Aorta (tissue), 5 donors: ENCODE measurements at regions of chr5 and their contacts with region 1.

Region 1: DNA sequence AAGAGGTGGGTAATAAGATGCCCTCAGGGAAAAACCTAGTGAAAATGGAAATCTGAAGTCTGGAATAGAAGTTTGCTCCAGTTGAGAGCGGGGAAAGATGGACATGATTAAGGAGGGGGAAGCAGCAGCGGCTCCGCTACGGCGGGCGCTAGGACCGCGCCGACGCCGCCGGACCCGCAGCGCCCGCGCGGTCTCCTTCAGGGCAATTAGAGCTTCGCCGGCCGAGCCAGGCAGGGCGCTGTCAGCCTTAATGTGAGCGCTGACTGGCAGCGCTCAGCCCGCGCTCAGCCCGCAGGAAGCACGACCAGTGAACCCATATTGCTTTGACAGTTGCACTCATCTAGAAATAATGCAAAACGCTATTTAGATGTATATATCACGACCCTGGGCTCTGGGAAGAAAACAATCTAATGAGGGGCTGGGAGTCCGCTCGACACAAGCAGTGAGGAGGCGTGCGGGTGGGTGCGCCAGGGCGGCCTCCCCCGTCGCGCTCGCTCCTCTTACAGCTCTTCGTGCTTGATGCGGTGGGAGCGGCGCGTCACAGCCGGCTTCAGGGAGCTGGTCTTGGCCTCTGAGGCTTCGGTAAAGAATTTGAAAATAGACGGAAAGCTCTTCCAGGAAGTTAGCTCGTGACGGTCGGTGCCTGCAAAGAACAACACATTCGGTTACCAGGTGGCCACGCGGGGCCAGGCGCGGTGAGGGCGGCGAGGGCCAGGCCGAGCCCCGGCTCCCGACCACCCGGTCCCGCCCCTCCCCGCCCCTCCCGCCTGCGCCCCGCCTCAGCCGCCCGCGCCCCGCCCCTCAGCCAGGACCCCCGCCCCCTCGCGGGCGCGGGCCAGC is 37.7 kb downstream of the NR2F1 start:
- DNase-seq: peak; percentile 74 to 88
- ATAC-seq: peak; percentile 92
- H3K4me3 ChIP-seq: peak overlapping the region; percentile 27 to 30
- H3K27ac ChIP-seq: peak overlapping the region in 1 of 2 donors; percentile 22
- H3K4me1 ChIP-seq: no peaks in the 10 kb centered on the region
- H3K27me3 ChIP-seq: no peaks in the 10 kb centered on the region

Region 2: DNA sequence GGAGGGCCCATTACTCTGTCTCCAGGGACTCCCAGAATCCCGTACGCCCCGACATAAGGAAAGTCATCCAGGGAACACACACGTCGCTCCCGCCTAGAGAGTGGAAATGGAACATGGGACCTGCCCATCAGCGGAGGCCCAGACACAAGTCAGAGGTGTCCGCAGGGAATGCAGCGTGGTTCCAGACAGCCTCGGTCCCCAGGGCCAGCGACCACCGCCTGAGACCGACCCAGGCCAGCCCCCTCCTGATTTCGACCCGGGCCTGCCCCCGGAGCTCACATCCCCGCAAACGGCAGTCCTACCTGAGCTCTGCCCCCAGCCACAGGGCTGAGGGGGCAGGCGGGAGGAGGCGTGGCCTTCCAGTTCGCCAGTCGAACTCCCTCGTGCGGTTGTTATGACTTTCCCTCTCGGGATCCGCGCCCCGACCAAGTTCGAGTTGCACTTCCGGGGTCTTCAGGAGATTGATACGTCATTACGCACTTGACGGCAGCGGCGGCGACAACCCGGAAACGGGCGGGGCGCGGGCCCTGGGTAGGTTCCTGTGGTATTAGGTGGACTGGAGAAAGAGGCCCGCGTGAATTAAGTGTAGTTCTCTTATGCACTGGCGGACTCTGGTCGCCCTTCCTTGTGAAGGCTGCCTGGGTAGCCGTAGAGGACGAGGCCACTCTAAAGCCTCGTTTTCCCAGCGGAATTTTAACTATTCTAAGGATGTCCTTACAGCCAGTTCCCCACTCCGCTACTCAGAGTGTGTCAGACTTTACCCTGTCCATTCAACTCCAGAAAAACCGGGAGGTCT is 490.7 kb after region 1 on chr5:
- intact Hi-C with region 1: loop called in 1 of 2 experiments (anchors 10 kb)
- DNase-seq: peak; percentile 97 to 98
- ATAC-seq: peak; percentile 98
- H3K4me3 ChIP-seq: peak overlapping the region; percentile 47 to 64
- H3K27ac ChIP-seq: peak overlapping the region; percentile 72 to 80
- H3K4me1 ChIP-seq: no peaks in the 10 kb centered on the region
- H3K27me3 ChIP-seq: no peaks in the 10 kb centered on the region